ENCODE measurements at regions of chr6 and their contacts with region 1.

Region 1: GRCh38 chr6:17628873-17629272 is 28.8 kb downstream of the FAM8A1 start:
- DNase-seq: no peak
- ATAC-seq: no peak
- H3K4me3 ChIP-seq: no peak overlapping the region
- H3K4me3 Mint-ChIP-seq: no peak overlapping the region
- H3K27ac ChIP-seq: no peak overlapping the region
- H3K27ac Mint-ChIP-seq: peak overlapping the region in 8 of 9 donors; percentile 2 to 73 (median 28)
- H3K4me1 ChIP-seq: peaks cover 9 to 17% of the 10 kb centered on the region in 2 donors
- H3K4me1 Mint-ChIP-seq: peaks cover 28 to 50% (median 41%) of the 10 kb centered on the region in 7 donors
- H3K27me3 ChIP-seq: no peaks in the 10 kb centered on the region
- H3K27me3 Mint-ChIP-seq: no peaks in the 10 kb centered on the region

Region 2: GRCh38 chr6:17610835-17611234 is 18.0 kb before region 1 on chr6:
- CTCF ChIA-PET with region 1: no interaction called
- POLR2A ChIA-PET with region 1: interaction called, 4 read pairs
- intact Hi-C with region 1: loop called in 1 of 2 experiments (anchors 2 kb)
- DNase-seq: no peak
- ATAC-seq: no peak
- H3K4me3 ChIP-seq: no peak overlapping the region
- H3K4me3 Mint-ChIP-seq: no peak overlapping the region
- H3K27ac ChIP-seq: no peak overlapping the region
- H3K27ac Mint-ChIP-seq: peak overlapping the region in 3 of 9 donors; percentile 0 to 40 (median 12)
- H3K4me1 ChIP-seq: no peaks in the 10 kb centered on the region
- H3K4me1 Mint-ChIP-seq: peaks cover 0 to 7% (median 4%) of the 10 kb centered on the region in 7 donors
- H3K27me3 ChIP-seq: no peaks in the 10 kb centered on the region
- H3K27me3 Mint-ChIP-seq: no peaks in the 10 kb centered on the region

Region 3: GRCh38 chr6:17666646-17667045 is 37.8 kb after region 1 on chr6:
- CTCF ChIA-PET with region 1: no interaction called
- POLR2A ChIA-PET with region 1: no interaction called
- intact Hi-C with region 1: loop called in 1 of 2 experiments (anchors 5 kb)
- DNase-seq: no peak
- ATAC-seq: no peak
- H3K4me3 ChIP-seq: no peak overlapping the region
- H3K4me3 Mint-ChIP-seq: peak overlapping the region in 1 of 10 donors; percentile 8
- H3K27ac ChIP-seq: no peak overlapping the region
- H3K27ac Mint-ChIP-seq: peak overlapping the region in 5 of 9 donors; percentile 13 to 92 (median 72)
- H3K4me1 ChIP-seq: peaks cover 0 to 13% of the 10 kb centered on the region in 2 donors
- H3K4me1 Mint-ChIP-seq: peaks cover 11 to 39% (median 27%) of the 10 kb centered on the region in 7 donors
- H3K27me3 ChIP-seq: no peaks in the 10 kb centered on the region
- H3K27me3 Mint-ChIP-seq: no peaks in the 10 kb centered on the region

Measured in naive thymus-derived CD4-positive, alpha-beta T cell (primary cell).